GM10248 (cell line): ENCODE measurements at regions of chr1 and their contacts with region 1.

Region 1: GRCh38 chr1:216221260-216221700 is 202.0 kb downstream of the USH2A start:
- DNase-seq: peak; percentile 28
- CTCF ChIP-seq: peak; percentile 71

Region 2: DNA sequence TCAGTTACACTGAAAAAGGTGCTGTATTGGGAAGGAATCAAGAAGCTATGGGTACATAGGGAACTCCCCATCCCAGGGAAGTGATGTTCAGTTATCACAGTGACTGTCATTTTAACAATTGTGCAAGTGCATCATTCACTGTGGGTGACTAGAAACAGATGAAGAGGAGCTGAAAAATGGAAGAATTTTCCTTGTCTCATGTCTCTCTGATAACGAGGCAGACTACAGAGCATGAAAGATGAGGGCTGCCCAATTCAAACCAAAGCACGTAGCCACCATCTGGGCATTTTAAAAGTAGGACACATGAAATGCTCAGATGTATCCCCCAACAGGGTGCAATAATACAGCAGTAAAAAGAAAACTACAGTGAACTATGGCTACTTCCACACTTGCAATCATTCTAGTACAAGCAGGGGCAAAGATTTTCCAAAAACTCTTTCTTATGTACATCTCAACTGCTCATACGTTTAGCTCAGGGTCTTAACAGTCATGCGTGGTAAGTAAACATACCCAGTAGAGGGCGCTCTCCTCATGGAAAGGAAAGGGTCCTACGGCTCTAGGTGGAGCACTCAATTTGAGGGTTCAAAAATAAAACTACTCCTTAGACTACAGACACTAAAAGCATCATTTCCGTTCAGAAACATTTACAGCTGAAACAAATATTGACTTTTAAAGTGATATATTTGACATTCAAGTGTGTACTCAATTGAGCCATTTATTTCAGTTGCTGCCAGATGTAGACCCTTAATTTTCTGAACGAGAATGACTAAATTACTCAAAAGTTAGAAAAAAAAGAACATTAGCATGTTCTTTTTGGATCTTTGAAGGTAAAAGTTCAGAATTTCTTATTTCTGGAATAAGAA is 511.0 kb before region 1 on chr1:
- CTCF ChIA-PET with region 1: interaction called, 10 read pairs
- POLR2A ChIA-PET with region 1: no interaction called
- DNase-seq: peak; percentile 39
- CTCF ChIP-seq: peak; percentile 46

Region 3: GRCh38 chr1:216095400-216095799 is 125.9 kb before region 1 on chr1:
- CTCF ChIA-PET with region 1: no interaction called
- POLR2A ChIA-PET with region 1: no interaction called
- DNase-seq: no peak
- CTCF ChIP-seq: no peak

Region 4: DNA sequence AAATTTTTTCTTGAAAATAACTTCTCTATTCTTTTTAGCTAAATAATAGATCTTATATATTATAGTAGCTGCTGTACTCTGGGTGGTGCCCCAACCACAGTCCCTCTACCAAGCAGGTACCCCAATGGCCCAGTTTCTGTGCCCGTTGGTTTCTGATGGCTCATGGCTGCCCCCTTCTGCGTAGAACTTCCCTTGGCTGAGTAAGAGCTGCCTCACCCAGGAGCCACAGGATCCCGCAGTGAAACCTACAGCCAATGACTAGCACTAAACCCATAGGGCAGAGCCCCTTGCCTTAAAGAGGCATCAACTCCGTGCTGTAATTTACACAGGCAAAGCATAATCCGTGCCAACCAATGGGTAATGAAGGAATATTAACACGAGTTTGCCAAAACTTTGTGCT is 45.6 kb before region 1 on chr1:
- CTCF ChIA-PET with region 1: interaction called, 13 read pairs
- POLR2A ChIA-PET with region 1: no interaction called
- DNase-seq: no peak
- CTCF ChIP-seq: no peak

Region 5: GRCh38 chr1:216194721-216195120 is 26.6 kb before region 1 on chr1:
- CTCF ChIA-PET with region 1: interaction called, 16 read pairs
- POLR2A ChIA-PET with region 1: no interaction called
- DNase-seq: no peak
- CTCF ChIP-seq: no peak

Region 6: DNA sequence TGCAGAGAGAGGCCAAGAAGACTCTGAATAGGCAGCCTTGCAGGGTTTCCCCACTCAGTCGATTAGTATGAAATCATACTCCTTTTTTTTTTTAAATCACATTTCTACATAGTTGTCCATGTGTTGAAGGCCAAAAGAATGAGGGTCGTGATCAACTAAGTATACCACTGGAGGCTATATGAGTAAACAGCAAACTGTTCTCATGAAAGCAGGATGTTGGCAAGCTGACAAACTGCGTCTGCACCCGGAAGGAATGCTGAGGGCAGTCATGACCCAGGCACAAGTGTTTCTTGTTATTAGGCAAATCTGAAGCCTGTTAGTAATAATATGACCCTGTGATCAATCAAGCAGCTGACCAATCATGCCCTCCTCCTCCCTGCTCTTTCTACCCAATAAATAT is 11.2 kb before region 1 on chr1:
- CTCF ChIA-PET with region 1: interaction called, 28 read pairs
- POLR2A ChIA-PET with region 1: no interaction called
- DNase-seq: no peak
- CTCF ChIP-seq: no peak

Region 7: GRCh38 chr1:216238844-216239243 is 17.6 kb after region 1 on chr1:
- CTCF ChIA-PET with region 1: interaction called, 21 read pairs
- POLR2A ChIA-PET with region 1: no interaction called
- DNase-seq: no peak
- CTCF ChIP-seq: no peak